Prostate gland (tissue), 2 donors: ENCODE measurements at regions of chr10 and their contacts with region 1.

Region 1: GRCh38 chr10:44974628-44975431 is 3.8 kb downstream of the DEPP1 start:
- DNase-seq: peak; percentile 59
- H3K4me3 ChIP-seq: peak overlapping the region; percentile 31 to 33
- H3K27ac ChIP-seq: peak overlapping the region; percentile 71 to 73
- H3K4me1 ChIP-seq: peaks cover 10% of the 10 kb centered on the region
- H3K27me3 ChIP-seq: no peaks in the 10 kb centered on the region
- CTCF ChIP-seq: peak; percentile 95 to 96 (median 96)
- POLR2A ChIP-seq: no peak

Region 2: DNA sequence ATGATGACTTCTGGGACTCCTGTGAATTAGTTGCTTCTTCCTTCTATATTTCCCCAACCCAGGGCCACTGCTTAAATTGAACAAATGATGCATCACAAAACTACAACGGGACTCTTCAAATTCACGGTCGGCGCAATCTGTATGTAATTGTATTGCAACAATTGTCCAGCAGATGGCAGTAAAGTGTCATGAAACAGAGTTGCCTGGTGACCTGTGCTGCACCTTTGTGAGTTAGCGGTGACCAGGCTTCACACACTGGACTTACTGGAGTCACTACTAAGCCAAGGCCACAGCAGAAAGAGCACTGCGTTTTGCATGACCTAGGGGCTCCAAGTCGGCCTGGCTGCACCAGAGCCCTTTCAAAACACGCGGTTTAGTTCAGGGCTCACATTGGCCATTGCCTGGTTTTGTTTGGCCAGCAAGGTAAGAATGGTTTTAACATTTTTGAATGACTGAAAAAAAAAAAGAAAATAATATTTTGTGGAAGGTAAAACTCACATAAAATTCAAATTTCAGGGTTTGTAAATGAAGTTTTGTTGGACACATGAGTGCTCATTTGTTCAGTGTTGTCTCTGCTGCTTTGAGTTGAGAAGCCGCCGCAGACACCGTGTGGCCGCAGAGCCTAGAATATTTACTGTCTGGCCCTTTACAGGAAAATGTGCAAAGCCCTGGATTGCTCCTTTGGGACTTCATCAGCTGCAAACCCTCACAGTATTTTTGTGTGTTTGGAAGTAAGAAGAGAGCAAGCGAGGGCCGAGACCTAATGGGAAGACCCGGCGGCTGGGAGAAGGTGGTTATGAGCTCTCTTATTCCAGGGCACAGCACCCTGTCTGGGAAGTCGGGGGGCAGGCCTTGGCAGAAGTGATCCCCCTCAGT is 1302.9 kb before region 1 on chr10:
- intact Hi-C with region 1: loop called (anchors 10 kb)
- DNase-seq: peak; percentile 63
- H3K4me3 ChIP-seq: no peak overlapping the region
- H3K27ac ChIP-seq: no peak overlapping the region
- H3K4me1 ChIP-seq: no peaks in the 10 kb centered on the region
- H3K27me3 ChIP-seq: peaks cover 2% of the 10 kb centered on the region
- CTCF ChIP-seq: peak; percentile 54 to 90 (median 81)
- POLR2A ChIP-seq: no peak

Region 3: GRCh38 chr10:44828508-44829142 is 146.2 kb before region 1 on chr10:
- intact Hi-C with region 1: no loop called
- DNase-seq: no peak
- H3K4me3 ChIP-seq: no peak overlapping the region
- H3K27ac ChIP-seq: no peak overlapping the region
- H3K4me1 ChIP-seq: no peaks in the 10 kb centered on the region
- H3K27me3 ChIP-seq: no peaks in the 10 kb centered on the region
- CTCF ChIP-seq: no peak
- POLR2A ChIP-seq: no peak

Region 4: GRCh38 chr10:44845361-44846175 is 129.3 kb before region 1 on chr10:
- intact Hi-C with region 1: no loop called
- DNase-seq: no peak
- H3K4me3 ChIP-seq: no peak overlapping the region
- H3K27ac ChIP-seq: no peak overlapping the region
- H3K4me1 ChIP-seq: no peaks in the 10 kb centered on the region
- H3K27me3 ChIP-seq: no peaks in the 10 kb centered on the region
- CTCF ChIP-seq: no peak
- POLR2A ChIP-seq: no peak

Region 5: GRCh38 chr10:44878706-44879530 is 95.9 kb before region 1 on chr10:
- intact Hi-C with region 1: loop called (anchors 2 kb)
- DNase-seq: peak; percentile 80
- H3K4me3 ChIP-seq: peak overlapping the region; percentile 21 to 35
- H3K27ac ChIP-seq: peak overlapping the region; percentile 30 to 53
- H3K4me1 ChIP-seq: no peaks in the 10 kb centered on the region
- H3K27me3 ChIP-seq: no peaks in the 10 kb centered on the region
- CTCF ChIP-seq: no peak
- POLR2A ChIP-seq: no peak

Region 6: GRCh38 chr10:44932517-44933450 is 42.0 kb before region 1 on chr10:
- intact Hi-C with region 1: loop called (anchors 2 kb)
- DNase-seq: peak; percentile 80
- H3K4me3 ChIP-seq: no peak overlapping the region
- H3K27ac ChIP-seq: no peak overlapping the region
- H3K4me1 ChIP-seq: no peaks in the 10 kb centered on the region
- H3K27me3 ChIP-seq: no peaks in the 10 kb centered on the region
- CTCF ChIP-seq: peak; percentile 88 to 96 (median 94)
- POLR2A ChIP-seq: no peak

Region 7: GRCh38 chr10:44959247-44960087 is 15.4 kb before region 1 on chr10 and contains the start of gene RASSF4:
- intact Hi-C with region 1: loop called (anchors 2 kb)
- DNase-seq: peak; percentile 89
- H3K4me3 ChIP-seq: peak within 1 kb of the TSS; percentile 51 to 72
- H3K27ac ChIP-seq: peak within 1 kb of the TSS; percentile 74 to 76
- H3K4me1 ChIP-seq: peaks cover 12% of the 10 kb centered on the region
- H3K27me3 ChIP-seq: no peaks in the 10 kb centered on the region
- CTCF ChIP-seq: peak in 1 of 4 experiments; percentile 26
- POLR2A ChIP-seq: peak; percentile 69
- total RNA-seq, gene RASSF4: 6.1 to 31.0 TPM